Activated CD4-positive, alpha-beta T cell treated with anti-CD3 and anti-CD28 coated beads for 36 hours (primary cell): ENCODE measurements at regions of chr15 and their contacts with region 1.

Region 1: GRCh38 chr15:99704444-99704838 is 28.8 kb downstream of the LYSMD4 start:
- DNase-seq: no peak
- ATAC-seq: peak; percentile 69
- H3K4me3 Mint-ChIP-seq: no peak overlapping the region
- H3K27ac Mint-ChIP-seq: no peak overlapping the region
- H3K4me1 Mint-ChIP-seq: peaks cover 48% of the 10 kb centered on the region
- H3K27me3 Mint-ChIP-seq: no peaks in the 10 kb centered on the region

Region 2: DNA sequence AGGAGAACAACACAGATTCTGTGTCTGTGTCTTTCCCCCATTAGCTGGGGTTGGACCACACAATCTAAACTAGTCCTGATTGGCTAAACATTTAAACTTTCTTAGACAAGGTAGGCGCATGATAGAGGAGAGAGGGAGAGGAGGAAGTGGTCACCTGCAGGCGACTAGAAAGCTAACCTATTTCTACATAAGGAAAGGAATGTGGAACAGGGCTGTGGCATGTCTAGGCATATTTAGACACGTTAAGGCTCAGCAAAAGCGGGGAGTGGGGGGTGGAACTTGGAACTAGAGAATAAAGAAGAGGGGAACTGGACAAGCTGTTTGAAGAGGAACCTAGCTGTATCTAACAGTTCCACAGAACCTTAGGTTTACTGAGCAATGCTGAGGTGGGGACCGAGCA is 440.3 kb before region 1 on chr15:
- CTCF ChIA-PET with region 1: interaction called, 27 read pairs
- POLR2A ChIA-PET with region 1: no interaction called
- intact Hi-C with region 1: no loop called
- DNase-seq: no peak
- ATAC-seq: no peak
- H3K4me3 Mint-ChIP-seq: no peak overlapping the region
- H3K27ac Mint-ChIP-seq: no peak overlapping the region
- H3K4me1 Mint-ChIP-seq: no peaks in the 10 kb centered on the region
- H3K27me3 Mint-ChIP-seq: no peaks in the 10 kb centered on the region

Region 3: DNA sequence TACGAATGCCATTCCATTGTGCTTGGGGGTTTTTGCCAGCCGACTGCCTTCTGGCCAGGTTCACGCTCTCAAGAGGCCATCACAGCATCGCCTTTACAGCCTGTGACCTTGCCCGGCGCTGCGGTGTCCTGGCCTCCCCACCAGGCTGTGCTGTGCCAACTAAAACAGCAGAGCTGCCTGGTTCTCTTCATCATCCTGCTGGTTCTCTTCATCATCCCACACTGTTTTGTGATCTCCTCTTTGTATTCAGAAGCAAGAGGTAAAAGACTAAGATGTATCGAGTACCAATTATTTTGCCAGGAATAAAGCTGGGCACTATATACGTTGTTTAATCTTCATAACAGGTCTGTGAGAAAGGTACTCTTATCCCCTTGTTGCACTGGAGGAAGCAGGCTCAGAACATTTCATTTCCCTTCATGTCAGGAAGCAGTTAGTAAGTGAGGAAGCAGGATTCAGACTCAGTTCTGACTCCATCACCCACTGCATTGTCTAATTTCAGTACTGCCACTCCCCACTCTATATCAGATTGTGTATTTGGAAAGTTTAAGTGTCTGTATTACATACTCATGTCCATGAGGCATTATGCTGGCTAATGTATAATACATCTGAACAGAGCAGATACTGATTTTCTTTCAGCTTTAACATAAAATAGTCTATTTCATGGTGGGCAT is 360.4 kb before region 1 on chr15:
- CTCF ChIA-PET with region 1: interaction called, 12 read pairs
- POLR2A ChIA-PET with region 1: no interaction called
- intact Hi-C with region 1: loop called (anchors 1 kb)
- DNase-seq: peak; percentile 71
- ATAC-seq: peak; percentile 90
- H3K4me3 Mint-ChIP-seq: no peak overlapping the region
- H3K27ac Mint-ChIP-seq: peak overlapping the region; percentile 7
- H3K4me1 Mint-ChIP-seq: peaks cover 12% of the 10 kb centered on the region
- H3K27me3 Mint-ChIP-seq: no peaks in the 10 kb centered on the region

Region 4: GRCh38 chr15:99485153-99485961 is 219.1 kb before region 1 on chr15:
- CTCF ChIA-PET with region 1: interaction called, 11 read pairs
- POLR2A ChIA-PET with region 1: no interaction called
- intact Hi-C with region 1: no loop called
- DNase-seq: no peak
- ATAC-seq: peak; percentile 9
- H3K4me3 Mint-ChIP-seq: peak overlapping the region; percentile 44
- H3K27ac Mint-ChIP-seq: peak overlapping the region; percentile 70
- H3K4me1 Mint-ChIP-seq: peaks cover 27% of the 10 kb centered on the region
- H3K27me3 Mint-ChIP-seq: peaks cover 5% of the 10 kb centered on the region

Region 5: DNA sequence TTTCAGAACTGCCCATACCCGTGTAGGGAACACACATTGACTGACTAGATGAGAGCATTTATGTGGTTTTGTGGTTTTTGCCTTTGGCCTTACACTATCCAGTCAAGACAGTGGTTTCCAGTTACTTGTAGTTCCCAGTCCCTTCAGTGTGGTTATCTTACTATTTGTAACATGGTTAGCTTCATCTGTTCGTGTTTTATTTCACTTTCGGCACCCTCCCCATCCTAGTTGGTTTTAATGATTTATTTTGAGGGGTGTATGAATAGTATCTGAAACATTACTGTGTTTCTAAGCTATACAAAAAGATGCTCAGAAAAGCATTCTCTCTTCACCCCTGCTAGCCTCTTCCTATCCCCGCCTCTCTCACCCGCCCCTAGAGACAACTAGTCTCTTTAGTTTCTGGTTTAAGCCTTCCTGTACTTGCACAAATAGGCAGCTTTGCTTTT is 14.7 kb after region 1 on chr15:
- CTCF ChIA-PET with region 1: interaction called, 47 read pairs
- POLR2A ChIA-PET with region 1: no interaction called
- intact Hi-C with region 1: no loop called
- DNase-seq: no peak
- ATAC-seq: peak; percentile 31
- H3K4me3 Mint-ChIP-seq: no peak overlapping the region
- H3K27ac Mint-ChIP-seq: no peak overlapping the region
- H3K4me1 Mint-ChIP-seq: peaks cover 40% of the 10 kb centered on the region
- H3K27me3 Mint-ChIP-seq: no peaks in the 10 kb centered on the region

Region 6: DNA sequence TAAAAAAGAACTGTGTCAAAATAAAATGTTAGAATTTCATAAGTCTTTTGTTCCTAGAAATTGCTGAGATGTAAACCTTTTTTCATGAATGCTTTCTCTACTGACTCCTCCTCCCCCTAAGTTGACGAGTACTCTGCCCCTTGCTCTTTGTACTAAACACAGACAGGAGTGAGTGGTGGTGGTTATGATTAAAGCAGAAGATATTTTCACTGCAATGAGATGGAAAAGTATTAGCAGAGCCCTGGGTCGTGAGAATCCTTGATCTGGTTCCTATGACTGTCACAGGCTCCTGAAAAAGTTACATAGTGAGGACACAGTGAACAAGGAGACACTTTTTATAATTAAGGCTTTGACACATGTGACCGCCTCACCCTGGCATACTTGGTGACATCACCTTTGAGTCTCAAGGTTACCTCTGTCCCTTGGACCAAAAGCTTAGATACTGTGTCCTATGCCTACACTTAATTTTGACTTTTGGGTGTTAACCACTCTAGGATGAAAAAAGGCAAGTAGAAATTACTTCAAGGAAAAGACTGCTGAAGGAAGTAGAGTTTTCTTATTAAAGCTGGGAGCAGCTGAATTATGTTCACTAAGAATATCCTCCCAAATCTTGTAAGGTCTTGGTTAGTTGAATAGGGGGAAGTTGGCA is 159.2 kb after region 1 on chr15:
- CTCF ChIA-PET with region 1: no interaction called
- POLR2A ChIA-PET with region 1: no interaction called
- intact Hi-C with region 1: no loop called
- DNase-seq: no peak
- ATAC-seq: no peak
- H3K4me3 Mint-ChIP-seq: no peak overlapping the region
- H3K27ac Mint-ChIP-seq: no peak overlapping the region
- H3K4me1 Mint-ChIP-seq: no peaks in the 10 kb centered on the region
- H3K27me3 Mint-ChIP-seq: no peaks in the 10 kb centered on the region